GM12878 (cell line): ENCODE measurements at regions of chrX and their contacts with region 1.

Region 1: DNA sequence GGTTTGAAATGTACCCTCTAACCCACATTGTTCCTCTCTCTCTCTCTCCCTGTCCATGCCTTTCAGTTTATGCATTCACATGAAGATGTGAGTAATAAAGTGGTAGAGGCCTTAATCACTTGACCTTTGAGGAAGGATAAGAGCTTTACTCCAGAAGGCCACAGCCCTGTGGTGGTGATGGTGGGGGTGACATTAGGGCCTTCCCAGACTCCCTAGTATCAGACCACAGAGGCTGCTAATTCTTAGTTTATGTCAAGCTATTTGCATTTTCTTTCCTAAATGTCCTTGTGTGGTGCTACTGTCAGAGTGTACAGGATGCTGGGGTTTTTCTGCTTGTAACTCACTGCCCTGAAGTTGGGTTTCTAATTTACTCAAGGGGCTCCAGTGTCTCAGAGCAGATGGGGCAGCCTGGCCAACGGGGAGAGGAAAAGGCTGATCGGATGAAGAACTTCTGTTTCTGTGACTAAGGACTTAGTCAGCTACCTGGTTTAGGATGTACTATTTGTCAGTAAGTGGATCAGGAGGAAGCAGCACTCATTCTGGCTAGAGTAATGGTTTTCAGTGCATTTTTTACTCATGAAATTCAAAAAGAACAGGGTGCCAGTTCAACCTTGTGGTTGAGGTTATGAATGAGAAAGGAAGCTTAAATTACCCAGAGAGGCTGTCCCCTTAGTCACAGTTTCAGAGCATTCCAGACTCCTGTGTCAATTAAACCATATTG is 509.6 kb upstream of the DIPK2B start:
- DNase-seq: peak; percentile 69
- ATAC-seq: peak; percentile 92
- H3K4me3 ChIP-seq: no peak overlapping the region
- H3K27ac ChIP-seq: no peak overlapping the region
- H3K4me1 ChIP-seq: no peaks in the 10 kb centered on the region
- H3K27me3 ChIP-seq: no peaks in the 10 kb centered on the region
- CTCF ChIP-seq: no peak
- EP300 ChIP-seq: no peak
- POLR2A ChIP-seq: no peak
- RAD21 ChIP-seq: no peak

Region 2: DNA sequence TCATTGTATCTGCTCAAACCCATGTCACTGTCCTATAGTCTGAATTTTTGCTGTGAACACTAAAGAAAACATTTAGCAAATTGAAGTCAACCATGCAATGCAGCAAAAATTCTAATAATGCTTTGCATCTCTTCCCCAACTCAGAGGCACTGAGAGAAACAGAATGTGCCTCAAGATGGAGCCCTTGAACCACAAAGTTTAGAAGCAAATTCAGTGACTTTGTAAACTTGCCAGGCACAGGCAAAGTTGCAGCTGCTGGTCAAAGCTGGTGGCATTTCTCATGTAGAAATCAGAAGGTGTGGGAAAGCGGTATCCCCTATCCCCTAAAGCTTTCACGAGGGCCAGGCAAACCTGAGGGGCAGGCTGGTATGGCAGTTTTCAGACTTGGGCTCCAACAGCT is 387.9 kb before region 1 on chrX:
- CTCF ChIA-PET with region 1: no interaction called
- POLR2A ChIA-PET with region 1: no interaction called
- RAD21 ChIA-PET with region 1: no interaction called
- SMC1A ChIA-PET with region 1: no interaction called
- in situ Hi-C with region 1: no loop called
- intact Hi-C with region 1: no loop called
- DNase-seq: no peak
- ATAC-seq: no peak
- H3K4me3 ChIP-seq: no peak overlapping the region
- H3K27ac ChIP-seq: no peak overlapping the region
- H3K4me1 ChIP-seq: no peaks in the 10 kb centered on the region
- H3K27me3 ChIP-seq: no peaks in the 10 kb centered on the region
- CTCF ChIP-seq: peak in 2 of 3 experiments; percentile 25 to 31; a peak in 2 of 6 replicates
- EP300 ChIP-seq: no peak
- POLR2A ChIP-seq: no peak
- RAD21 ChIP-seq: peak; percentile 36; the same call in 1 of the 2 replicates

Region 3: GRCh38 chrX:45758319-45758718 is 48.1 kb after region 1 on chrX:
- CTCF ChIA-PET with region 1: no interaction called
- POLR2A ChIA-PET with region 1: no interaction called
- RAD21 ChIA-PET with region 1: no interaction called
- SMC1A ChIA-PET with region 1: interaction called, 3 read pairs
- in situ Hi-C with region 1: no loop called
- intact Hi-C with region 1: loop called (anchors 1 kb)
- DNase-seq: peak; percentile 61
- ATAC-seq: peak; percentile 57
- H3K4me3 ChIP-seq: no peak overlapping the region
- H3K27ac ChIP-seq: peak overlapping the region; percentile 62
- H3K4me1 ChIP-seq: peaks cover 20% of the 10 kb centered on the region
- H3K27me3 ChIP-seq: no peaks in the 10 kb centered on the region
- CTCF ChIP-seq: no peak
- EP300 ChIP-seq: peak; percentile 64 to 73; a peak in 3 of 4 replicates
- POLR2A ChIP-seq: no peak
- RAD21 ChIP-seq: 0 out of 2 replicates have a peak, but pooled peaks have one; percentile 1

Region 4: DNA sequence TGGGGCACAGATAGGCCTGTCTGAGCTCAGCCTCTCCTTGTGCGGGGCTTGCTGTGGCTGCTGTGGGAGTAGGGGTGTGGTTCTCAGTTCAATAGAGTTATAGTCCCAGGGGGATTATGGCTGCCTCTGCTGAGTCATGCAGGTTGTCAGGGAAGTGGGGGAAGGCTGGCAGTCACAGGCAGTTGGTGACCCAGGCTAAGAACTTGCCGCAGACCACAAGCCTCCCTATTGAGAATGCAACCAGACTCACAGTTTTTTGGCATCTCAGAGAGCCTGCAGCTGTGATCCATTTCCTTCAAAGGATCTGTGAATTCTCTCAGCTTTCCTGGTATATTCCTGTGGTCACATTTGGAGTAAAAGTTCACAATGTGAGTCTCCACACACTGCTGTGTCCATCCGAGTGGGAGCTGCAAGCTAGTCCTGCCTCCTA is 470.0 kb after region 1 on chrX:
- CTCF ChIA-PET with region 1: no interaction called
- POLR2A ChIA-PET with region 1: no interaction called
- RAD21 ChIA-PET with region 1: no interaction called
- SMC1A ChIA-PET with region 1: no interaction called
- in situ Hi-C with region 1: no loop called
- intact Hi-C with region 1: loop called (anchors 5 kb)
- DNase-seq: peak; percentile 49
- ATAC-seq: peak; percentile 96
- H3K4me3 ChIP-seq: no peak overlapping the region
- H3K27ac ChIP-seq: no peak overlapping the region
- H3K4me1 ChIP-seq: no peaks in the 10 kb centered on the region
- H3K27me3 ChIP-seq: no peaks in the 10 kb centered on the region; a peak in 1 of 4 replicates
- CTCF ChIP-seq: no peak
- EP300 ChIP-seq: peak in 1 of 2 experiments; percentile 33; a peak in 1 of 4 replicates
- POLR2A ChIP-seq: no peak
- RAD21 ChIP-seq: no peak